HEK293 (cell line): ENCODE measurements at regions of chr20 and their contacts with region 1.

Region 1: GRCh38 chr20:50987592-50988210 is 29.1 kb downstream of the MOCS3 start:
- H3K4me3 ChIP-seq: no peak overlapping the region
- H3K27ac ChIP-seq: no peak overlapping the region
- H3K4me1 ChIP-seq: no peaks in the 10 kb centered on the region
- CTCF ChIP-seq: peak; percentile 80

Region 2: DNA sequence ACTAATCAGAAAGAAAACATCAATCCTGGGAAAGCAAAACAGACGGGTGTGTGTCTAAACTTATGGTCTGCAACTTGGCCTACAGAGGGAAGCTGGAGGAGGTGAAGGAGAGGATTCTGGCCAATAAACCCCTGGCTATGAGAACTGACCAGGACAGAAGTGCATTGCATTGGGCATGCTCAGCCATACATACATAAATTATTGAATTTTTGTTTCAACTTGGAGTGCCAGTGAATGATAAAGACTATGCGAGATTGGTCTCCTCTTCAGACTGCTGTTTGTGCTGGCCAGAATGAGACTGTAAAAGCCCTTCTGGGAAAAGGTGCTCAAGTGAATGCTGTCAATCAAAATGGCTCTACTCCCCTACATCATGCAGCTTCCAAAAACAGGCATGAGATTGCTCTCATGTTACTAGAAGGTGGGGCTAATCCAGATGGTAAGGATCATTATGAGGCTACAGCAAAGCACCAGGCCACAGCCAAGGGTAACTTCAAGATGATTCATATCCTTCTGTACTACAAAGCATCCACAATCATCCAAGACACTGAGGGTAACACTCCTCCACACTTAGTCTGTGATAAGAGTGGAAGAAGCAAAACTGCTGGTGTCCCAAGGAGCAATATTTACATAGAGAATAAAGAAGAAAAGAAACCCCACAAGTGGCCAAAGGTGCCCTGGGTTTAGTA is 73.9 kb before region 1 on chr20:
- CTCF ChIA-PET with region 1: no interaction called
- POLR2A ChIA-PET with region 1: no interaction called
- H3K4me3 ChIP-seq: no peak overlapping the region
- H3K27ac ChIP-seq: no peak overlapping the region
- H3K4me1 ChIP-seq: peaks cover 39% of the 10 kb centered on the region
- CTCF ChIP-seq: no peak

Region 3: GRCh38 chr20:51014797-51015722 is 27.4 kb after region 1 on chr20:
- CTCF ChIA-PET with region 1: interaction called, 16 read pairs
- POLR2A ChIA-PET with region 1: interaction called, 8 read pairs
- H3K4me3 ChIP-seq: no peak overlapping the region
- H3K27ac ChIP-seq: no peak overlapping the region
- H3K4me1 ChIP-seq: no peaks in the 10 kb centered on the region
- CTCF ChIP-seq: peak; percentile 77

Region 4: DNA sequence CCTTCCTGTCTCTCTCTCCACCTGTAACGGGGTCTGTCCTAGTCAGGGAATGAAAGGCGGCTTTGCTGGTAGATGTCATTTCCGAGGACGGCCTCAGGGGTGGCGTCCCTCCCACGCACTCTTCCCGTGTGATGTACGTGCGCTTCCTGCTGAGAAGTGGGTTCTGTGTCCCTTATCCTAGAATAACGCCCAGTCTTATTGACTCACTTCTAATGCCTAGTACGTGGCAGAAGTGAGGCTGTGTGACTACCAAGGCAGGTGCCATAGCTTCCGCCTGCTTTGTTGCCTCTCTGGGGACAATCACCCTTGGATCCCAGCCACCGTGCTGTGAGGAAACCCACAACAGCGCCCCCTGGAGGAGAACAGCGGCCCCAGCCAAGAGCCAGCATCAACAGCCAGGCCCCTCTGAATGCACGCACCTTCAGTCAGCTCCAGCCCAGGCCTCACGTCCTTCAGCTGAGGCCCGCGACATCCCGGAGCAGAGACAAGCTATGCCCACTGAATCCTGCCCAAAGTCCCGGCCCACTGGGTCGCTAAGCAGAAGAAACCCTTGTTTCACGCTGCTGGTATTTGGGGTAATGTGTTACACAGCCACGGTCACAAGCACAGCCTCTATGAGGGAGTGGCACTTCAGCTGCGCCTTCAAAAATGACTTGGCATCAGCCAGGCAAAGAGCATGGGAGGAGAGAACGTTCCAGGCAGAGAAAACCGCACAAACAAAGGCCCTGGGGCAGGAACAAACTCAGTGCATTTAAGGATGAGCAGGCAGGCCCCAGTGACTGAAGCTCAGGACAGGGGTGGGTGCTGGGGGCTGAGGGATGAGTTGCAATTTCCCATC is 330.6 kb after region 1 on chr20:
- CTCF ChIA-PET with region 1: interaction called, 19 read pairs
- POLR2A ChIA-PET with region 1: no interaction called
- H3K4me3 ChIP-seq: no peak overlapping the region
- H3K27ac ChIP-seq: no peak overlapping the region
- H3K4me1 ChIP-seq: no peaks in the 10 kb centered on the region
- CTCF ChIP-seq: no peak

Region 5: GRCh38 chr20:51595058-51595532 is 607.4 kb after region 1 on chr20:
- CTCF ChIA-PET with region 1: interaction called, 12 read pairs
- POLR2A ChIA-PET with region 1: no interaction called
- H3K4me3 ChIP-seq: no peak overlapping the region
- H3K27ac ChIP-seq: no peak overlapping the region
- H3K4me1 ChIP-seq: no peaks in the 10 kb centered on the region
- CTCF ChIP-seq: peak; percentile 75